ENCODE measurements at regions of chr1 and their contacts with region 1.

Region 1: DNA sequence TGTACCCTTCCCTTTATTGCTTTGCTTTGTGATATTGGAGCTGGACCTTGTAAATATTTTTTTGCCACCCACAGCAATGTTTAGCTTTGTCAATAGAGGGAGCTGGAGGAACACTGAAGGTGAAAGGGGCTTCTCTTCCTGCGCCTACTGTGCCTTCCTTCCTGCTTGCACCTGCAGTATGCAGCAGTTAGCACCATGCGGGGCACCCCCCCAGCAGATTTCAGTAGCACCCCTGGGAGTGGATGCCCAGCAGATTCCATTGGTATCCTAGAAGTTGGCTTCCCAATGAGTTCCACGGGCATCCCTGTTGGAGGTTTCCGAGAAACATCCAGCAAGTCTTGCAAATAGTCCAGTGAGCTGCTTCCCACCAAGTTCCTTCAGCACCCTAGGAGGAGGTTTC is 25.6 kb downstream of the S100A10 start:
- DNase-seq: peak in 1 of 2 experiments; percentile 67
- H3K4me3 ChIP-seq: no peak overlapping the region
- H3K27ac ChIP-seq: no peak overlapping the region
- H3K4me1 ChIP-seq: peaks cover 0 to 11% (median 2%) of the 10 kb centered on the region in 4 experiments; a peak in 5 of 7 replicates
- H3K27me3 ChIP-seq: no peaks in the 10 kb centered on the region
- CTCF ChIP-seq: peak; percentile 38 to 86 (median 82)
- EP300 ChIP-seq: no peak
- POLR2A ChIP-seq: no peak
- RAD21 ChIP-seq: peak; percentile 93

Region 2: GRCh38 chr1:151909150-151910149 is 58.6 kb before region 1 on chr1 and contains the start of gene THEM4:
- CTCF ChIA-PET with region 1: interaction called, 11 read pairs
- POLR2A ChIA-PET with region 1: no interaction called
- DNase-seq: peak; percentile 97 to 99
- H3K4me3 ChIP-seq: peak within 1 kb of the TSS; percentile 60 to 85 (median 74)
- H3K27ac ChIP-seq: peak within 1 kb of the TSS; percentile 87
- H3K4me1 ChIP-seq: peaks cover 0 to 6% (median 2%) of the 10 kb centered on the region in 4 experiments; a peak in 3 of 7 replicates
- H3K27me3 ChIP-seq: no peaks in the 10 kb centered on the region
- CTCF ChIP-seq: peak in 1 of 3 experiments; percentile 27; a peak in 1 of 4 replicates
- EP300 ChIP-seq: peak in 1 of 2 experiments; percentile 44; a peak in 1 of 3 replicates
- POLR2A ChIP-seq: peak; percentile 70 to 86
- RAD21 ChIP-seq: peak; percentile 3 to 8; a peak in 2 of 4 replicates
- total RNA-seq, gene THEM4: 8.6 and 11.2 TPM in 2 replicates

Region 3: DNA sequence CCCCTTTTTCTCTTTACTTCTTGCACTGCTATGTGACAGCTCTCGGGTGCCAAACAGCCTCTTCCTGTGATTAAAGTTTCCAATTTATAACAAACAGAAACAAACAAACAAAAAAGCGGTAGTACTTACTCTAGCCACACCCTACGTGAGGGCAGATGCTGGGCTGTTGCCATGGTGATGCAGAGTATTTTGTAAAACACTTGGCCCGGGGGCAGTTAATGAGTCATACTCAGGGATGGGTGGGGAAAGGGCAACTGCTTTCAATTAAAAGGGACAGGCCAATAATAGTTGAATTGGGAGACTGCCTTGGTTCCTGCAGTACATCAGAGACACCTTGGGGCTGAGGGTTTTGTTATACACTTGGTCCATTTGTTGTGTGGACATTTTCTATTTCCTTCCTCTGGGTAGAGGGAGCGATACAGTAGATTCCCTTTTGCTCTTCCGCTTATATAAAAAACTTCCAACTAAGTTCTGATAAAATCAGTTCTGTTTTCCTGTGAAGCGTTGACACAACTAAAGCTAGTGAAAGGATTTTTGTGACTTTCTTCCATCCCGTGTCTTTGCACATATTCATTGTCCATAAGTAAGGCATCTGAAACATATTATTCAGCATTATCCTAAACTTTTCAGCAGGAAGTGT is 22.2 kb before region 1 on chr1:
- CTCF ChIA-PET with region 1: interaction called, 34 read pairs
- POLR2A ChIA-PET with region 1: no interaction called
- DNase-seq: peak; percentile 57 to 59
- H3K4me3 ChIP-seq: no peak overlapping the region
- H3K27ac ChIP-seq: 0 out of 2 replicates have a peak overlapping the region, but pooled peaks have one; percentile 14
- H3K4me1 ChIP-seq: peaks cover 0 to 3% (median 0%) of the 10 kb centered on the region in 4 experiments; a peak in 2 of 7 replicates
- H3K27me3 ChIP-seq: no peaks in the 10 kb centered on the region
- CTCF ChIP-seq: no peak
- EP300 ChIP-seq: peak in 1 of 2 experiments; percentile 83; a peak in 1 of 3 replicates
- POLR2A ChIP-seq: no peak; a peak in 1 of 3 replicates
- RAD21 ChIP-seq: no peak

Region 4: DNA sequence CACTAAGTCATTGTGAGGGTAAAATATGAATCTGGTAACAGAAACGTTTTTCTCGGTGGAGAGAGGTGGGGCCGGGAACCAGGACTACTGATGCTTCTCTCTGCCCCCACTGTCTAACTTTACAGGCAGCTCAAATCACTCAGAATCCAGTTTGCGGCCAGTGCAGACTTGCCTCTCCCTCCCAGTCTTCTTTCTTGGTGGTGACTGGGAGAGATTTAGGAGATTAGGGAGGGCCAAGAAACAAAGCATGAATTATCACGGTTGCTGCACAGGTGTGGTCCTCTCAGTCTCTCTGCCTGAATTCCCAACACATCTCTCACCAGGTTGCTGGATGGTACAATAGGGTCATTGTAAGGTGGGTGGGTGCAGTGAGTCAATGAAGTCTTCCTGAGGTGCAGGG is 56.1 kb after region 1 on chr1:
- CTCF ChIA-PET with region 1: interaction called, 15 read pairs
- POLR2A ChIA-PET with region 1: no interaction called
- DNase-seq: no peak
- H3K4me3 ChIP-seq: no peak overlapping the region
- H3K27ac ChIP-seq: no peak overlapping the region
- H3K4me1 ChIP-seq: peaks cover 0 to 5% (median 2%) of the 10 kb centered on the region in 4 experiments; a peak in 2 of 7 replicates
- H3K27me3 ChIP-seq: no peaks in the 10 kb centered on the region
- CTCF ChIP-seq: no peak
- EP300 ChIP-seq: no peak
- POLR2A ChIP-seq: no peak
- RAD21 ChIP-seq: no peak

Region 5: GRCh38 chr1:152034646-152035405 is 66.8 kb after region 1 on chr1:
- CTCF ChIA-PET with region 1: interaction called, 23 read pairs
- POLR2A ChIA-PET with region 1: no interaction called
- DNase-seq: peak in 1 of 2 experiments; percentile 87
- H3K4me3 ChIP-seq: peak overlapping the region in 2 of 4 experiments; percentile 74 to 76; a peak in 4 of 8 replicates
- H3K27ac ChIP-seq: no peak overlapping the region
- H3K4me1 ChIP-seq: peaks cover 4 to 12% (median 6%) of the 10 kb centered on the region in 4 experiments
- H3K27me3 ChIP-seq: no peaks in the 10 kb centered on the region; a peak in 2 of 7 replicates
- CTCF ChIP-seq: peak; percentile 56 to 79 (median 73)
- EP300 ChIP-seq: no peak
- POLR2A ChIP-seq: no peak
- RAD21 ChIP-seq: peak; percentile 42 to 56; a peak in 3 of 4 replicates